Activated CD4-positive, alpha-beta memory T cell treated with anti-CD3 and anti-CD28 coated beads for 36 hours (primary cell): ENCODE measurements at regions of chr13 and their contacts with region 1.

Region 1: DNA sequence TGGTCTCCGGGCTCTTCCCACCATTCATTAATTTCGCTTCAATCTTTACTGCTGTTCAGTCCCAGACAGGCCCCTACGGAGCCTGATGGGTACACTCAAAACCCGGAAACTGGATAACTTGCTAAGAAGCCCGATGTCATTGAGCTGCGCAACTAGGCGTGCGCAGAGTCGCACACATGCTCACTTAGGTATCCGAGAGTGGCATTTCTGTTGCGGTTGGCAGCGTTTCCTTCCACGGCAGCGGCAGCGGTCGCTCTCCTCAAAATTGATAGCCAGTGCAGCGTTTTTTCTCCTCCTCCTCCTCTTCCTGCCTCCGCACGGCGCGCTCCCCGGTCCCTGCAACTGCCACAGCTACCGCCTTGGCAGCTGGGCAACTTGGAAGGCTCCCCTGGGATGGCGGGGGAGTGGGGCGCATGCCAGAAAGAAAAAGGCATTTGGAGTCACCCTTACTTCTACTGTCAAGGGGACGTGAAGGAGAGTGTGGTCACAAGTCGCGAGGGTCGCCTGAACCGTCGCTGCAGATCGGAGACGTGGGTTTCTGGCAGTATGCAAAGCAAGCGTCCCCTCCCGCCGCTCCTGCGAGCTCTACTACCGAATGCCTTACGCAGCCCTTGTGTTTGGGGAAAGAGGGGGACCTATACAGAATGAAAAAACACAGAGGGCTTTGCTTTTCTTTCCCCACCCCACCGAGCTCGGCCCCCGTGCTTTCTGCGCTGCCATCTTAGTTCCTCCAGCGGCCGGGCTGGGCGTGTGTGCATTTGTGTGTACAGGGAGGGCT is 2.4 kb upstream of the MYCBP2 start:
- DNase-seq: peak; percentile 96
- H3K4me3 Mint-ChIP-seq: peak overlapping the region; percentile 98
- H3K27ac Mint-ChIP-seq: peak overlapping the region; percentile 96
- H3K4me1 Mint-ChIP-seq: peaks cover 35% of the 10 kb centered on the region
- H3K27me3 Mint-ChIP-seq: no peaks in the 10 kb centered on the region

Region 2: DNA sequence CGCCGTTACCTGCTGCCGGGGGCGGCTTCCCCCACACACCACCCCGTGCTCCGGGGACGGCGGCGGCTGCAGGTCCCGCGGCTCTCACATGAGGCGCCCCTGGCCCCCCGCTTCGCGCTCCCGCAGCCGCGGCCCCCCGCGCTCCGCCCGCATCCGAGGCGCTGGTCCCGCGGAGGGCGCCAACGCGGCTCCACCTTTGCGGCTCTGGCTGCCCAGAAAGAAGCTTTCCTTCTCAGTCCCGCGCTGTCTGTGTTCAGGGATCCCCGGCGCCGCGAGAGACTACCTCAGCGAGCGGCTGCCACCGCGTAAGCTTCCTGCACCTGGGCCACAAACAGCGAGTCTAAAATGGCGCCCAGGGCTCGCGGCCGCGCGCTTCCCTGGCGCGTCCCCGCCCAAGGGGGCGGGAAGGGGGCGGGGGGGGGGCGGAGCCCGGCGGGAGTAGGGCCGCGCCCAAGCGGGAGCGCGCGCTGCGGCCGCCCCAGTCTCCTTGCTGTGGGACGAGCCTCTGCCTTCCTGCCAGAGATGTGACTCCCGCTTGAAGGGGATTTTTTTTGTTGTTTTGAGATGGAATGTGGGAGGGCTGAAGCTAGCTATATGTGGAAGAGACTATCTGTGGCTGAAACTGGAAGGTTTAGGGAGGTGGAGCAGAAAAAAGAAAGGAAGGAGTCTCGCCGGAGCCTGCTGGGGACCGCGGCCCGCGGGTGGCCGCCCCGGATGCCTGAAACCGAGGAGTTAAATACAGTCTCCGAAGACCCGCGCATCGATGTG is 302.3 kb before region 1 on chr13 and contains the start of gene FBXL3:
- CTCF ChIA-PET with region 1: interaction called, 3 read pairs
- POLR2A ChIA-PET with region 1: interaction called, 5 read pairs
- intact Hi-C with region 1: loop called (anchors 1 kb)
- DNase-seq: peak; percentile 89
- H3K4me3 Mint-ChIP-seq: peak within 1 kb of the TSS; percentile 99
- H3K27ac Mint-ChIP-seq: peak within 1 kb of the TSS; percentile 96
- H3K4me1 Mint-ChIP-seq: peaks cover 41% of the 10 kb centered on the region
- H3K27me3 Mint-ChIP-seq: no peaks in the 10 kb centered on the region
- total RNA-seq, gene FBXL3: 35.6 to 35.7 TPM

Region 3: GRCh38 chr13:77291774-77292173 is 37.5 kb before region 1 on chr13:
- CTCF ChIA-PET with region 1: interaction called, 7 read pairs
- POLR2A ChIA-PET with region 1: interaction called, 4 read pairs
- intact Hi-C with region 1: loop called (anchors 1 kb)
- DNase-seq: no peak
- H3K4me3 Mint-ChIP-seq: no peak overlapping the region
- H3K27ac Mint-ChIP-seq: peak overlapping the region; percentile 42
- H3K4me1 Mint-ChIP-seq: peaks cover 39% of the 10 kb centered on the region
- H3K27me3 Mint-ChIP-seq: no peaks in the 10 kb centered on the region

Region 4: DNA sequence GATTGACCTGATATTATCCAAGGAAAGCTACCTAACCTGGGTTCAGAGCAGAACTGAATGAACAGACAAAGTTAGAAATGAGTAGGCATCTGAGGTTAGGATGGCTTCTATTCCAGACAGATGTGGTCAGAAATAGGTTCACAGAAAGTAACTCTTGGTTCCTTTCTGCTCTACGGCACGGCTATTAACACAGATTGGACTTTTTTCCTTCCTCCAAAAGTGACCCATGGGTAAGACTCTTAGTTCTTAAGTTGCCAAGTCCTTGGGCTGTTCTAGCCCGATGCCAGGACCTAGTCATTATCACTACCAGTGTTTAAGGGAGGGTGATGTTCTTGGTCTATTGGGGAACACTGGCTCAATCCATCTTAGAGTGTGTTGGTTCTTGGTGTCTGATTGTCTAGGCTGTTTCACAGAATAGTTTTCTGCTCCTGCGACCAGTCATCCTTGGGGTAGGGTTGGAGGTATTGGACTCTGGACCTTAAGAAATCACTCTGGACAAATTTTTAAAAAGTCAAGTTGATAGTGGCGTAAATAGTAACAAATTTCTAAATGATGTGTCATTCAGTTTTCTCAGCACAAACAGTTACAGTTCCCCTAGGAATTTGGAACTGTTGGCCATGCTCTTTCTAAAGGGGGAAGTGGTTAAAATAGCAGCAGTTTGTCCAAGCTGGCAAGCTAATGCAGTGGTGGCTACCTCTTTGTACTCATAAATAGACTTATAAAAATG is 57.7 kb after region 1 on chr13:
- CTCF ChIA-PET with region 1: interaction called, 6 read pairs
- POLR2A ChIA-PET with region 1: interaction called, 7 read pairs
- intact Hi-C with region 1: loop called (anchors 1 kb)
- DNase-seq: no peak
- H3K4me3 Mint-ChIP-seq: no peak overlapping the region
- H3K27ac Mint-ChIP-seq: no peak overlapping the region
- H3K4me1 Mint-ChIP-seq: peaks cover 16% of the 10 kb centered on the region
- H3K27me3 Mint-ChIP-seq: peaks cover 1% of the 10 kb centered on the region

Region 5: DNA sequence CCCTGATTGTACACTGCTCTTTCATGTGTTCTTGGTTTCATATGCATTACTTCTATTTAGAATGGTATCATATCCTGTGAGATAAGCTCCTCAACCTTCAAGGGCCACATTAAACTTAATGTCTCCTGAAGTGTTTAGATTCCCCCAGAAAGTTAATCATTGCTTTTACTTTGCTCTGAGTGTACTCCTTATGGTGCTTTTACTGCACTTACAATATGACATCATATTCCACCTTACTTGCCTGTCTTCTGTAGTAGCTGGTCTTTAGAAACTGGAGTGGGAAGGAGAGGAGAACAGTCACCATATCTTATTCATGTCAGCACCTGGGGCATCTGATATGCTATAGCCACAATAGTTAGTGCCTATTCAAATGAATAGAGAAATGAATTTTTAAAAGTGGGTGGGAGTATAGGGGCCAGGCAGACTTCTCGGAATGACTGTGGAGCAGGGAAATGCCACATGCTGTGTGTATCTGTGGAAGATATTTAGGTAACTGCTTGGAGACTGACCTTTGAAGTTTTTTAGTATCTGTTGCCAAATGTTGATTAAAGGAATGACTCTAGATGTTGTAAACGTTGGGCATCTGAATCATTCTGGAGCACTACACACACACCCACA is 408.4 kb after region 1 on chr13:
- CTCF ChIA-PET with region 1: no interaction called
- POLR2A ChIA-PET with region 1: no interaction called
- intact Hi-C with region 1: loop called (anchors 5 kb)
- DNase-seq: peak; percentile 54
- H3K4me3 Mint-ChIP-seq: no peak overlapping the region
- H3K27ac Mint-ChIP-seq: no peak overlapping the region
- H3K4me1 Mint-ChIP-seq: peaks cover 17% of the 10 kb centered on the region
- H3K27me3 Mint-ChIP-seq: no peaks in the 10 kb centered on the region